ENCODE measurements at regions of chr4 and their contacts with region 1.

Region 1: DNA sequence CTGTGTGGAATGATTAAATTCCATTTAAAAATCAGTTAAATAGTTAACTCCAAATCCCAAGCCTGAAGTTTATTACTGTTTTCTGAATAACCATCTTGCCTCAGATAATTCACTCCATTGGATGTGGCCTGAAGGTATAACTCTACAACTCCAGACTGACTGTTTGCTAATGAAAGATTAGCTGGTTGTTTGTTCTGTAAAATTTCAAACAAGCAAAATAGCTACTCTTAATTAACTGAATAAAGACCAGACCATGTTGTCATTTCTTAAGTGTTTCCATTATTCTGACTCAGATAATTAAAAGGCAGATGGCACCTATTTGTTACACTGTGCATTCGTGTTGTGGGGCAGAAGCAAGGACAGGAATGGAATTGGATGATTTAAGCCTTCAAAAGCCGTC is 78.5 kb upstream of the DDIT4L start:
- DNase-seq: no peak
- H3K4me3 ChIP-seq: no peak overlapping the region
- H3K27ac ChIP-seq: no peak overlapping the region
- H3K4me1 ChIP-seq: no peaks in the 10 kb centered on the region
- H3K27me3 ChIP-seq: no peaks in the 10 kb centered on the region
- CTCF ChIP-seq: no peak
- POLR2A ChIP-seq: no peak

Region 2: GRCh38 chr4:99117876-99118693 is 1150.7 kb before region 1 on chr4:
- intact Hi-C with region 1: no loop called
- DNase-seq: no peak
- H3K4me3 ChIP-seq: no peak overlapping the region
- H3K27ac ChIP-seq: no peak overlapping the region
- H3K4me1 ChIP-seq: no peaks in the 10 kb centered on the region
- H3K27me3 ChIP-seq: no peaks in the 10 kb centered on the region
- CTCF ChIP-seq: no peak
- POLR2A ChIP-seq: no peak

Region 3: DNA sequence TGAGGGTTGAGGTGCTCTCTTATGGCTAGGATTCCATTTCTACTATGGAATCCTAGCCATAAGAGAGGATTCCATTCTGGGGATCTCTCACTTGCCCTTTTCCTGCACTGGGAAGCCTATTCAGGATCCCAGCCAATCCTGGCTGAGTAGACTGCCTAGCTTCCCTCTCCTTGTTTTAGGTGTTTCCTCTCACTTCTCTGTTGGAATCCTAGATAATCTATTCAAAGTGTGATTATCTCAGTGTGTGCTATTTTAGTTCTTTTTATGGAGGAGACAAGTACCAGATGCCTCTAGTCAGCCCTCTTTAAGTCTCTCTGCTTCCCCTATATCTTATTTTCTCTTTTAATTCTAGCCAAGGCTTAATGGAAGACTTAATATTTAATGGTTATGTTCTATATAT is 44.1 kb before region 1 on chr4:
- intact Hi-C with region 1: loop called (anchors 2 kb)
- DNase-seq: no peak
- H3K4me3 ChIP-seq: no peak overlapping the region
- H3K27ac ChIP-seq: no peak overlapping the region
- H3K4me1 ChIP-seq: no peaks in the 10 kb centered on the region
- H3K27me3 ChIP-seq: no peaks in the 10 kb centered on the region
- CTCF ChIP-seq: no peak
- POLR2A ChIP-seq: no peak